Mammary epithelial cell (primary cell): ENCODE measurements at regions of chr21 and their contacts with region 1.

Region 1: DNA sequence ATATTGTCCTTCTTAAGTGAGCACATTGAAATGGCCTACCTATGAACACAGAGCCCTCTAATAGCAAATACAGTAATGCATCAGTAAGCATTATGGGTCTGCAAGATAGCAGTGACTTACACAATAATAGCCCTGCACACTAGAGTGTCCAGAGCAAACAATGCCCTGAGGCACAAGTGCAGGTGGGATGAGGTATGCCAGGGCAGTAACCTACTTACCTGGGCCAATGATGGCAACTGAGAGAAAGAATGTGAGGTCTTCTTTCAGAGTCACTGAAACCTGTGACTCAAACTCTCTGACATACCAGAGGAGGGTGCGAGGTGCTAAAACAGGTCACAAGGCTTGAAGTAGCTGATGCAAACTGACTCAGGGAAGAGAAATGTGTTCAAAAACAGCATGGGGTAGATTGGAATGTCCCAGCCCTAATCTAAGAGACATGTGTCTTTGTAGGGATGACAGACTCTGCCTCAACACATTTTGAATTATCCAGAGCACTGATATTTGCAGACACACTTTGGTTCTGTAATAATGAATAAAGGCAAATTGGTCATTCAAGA is 168.5 kb upstream of the RUNX1 start:
- DNase-seq: peak; percentile 100
- H3K4me3 ChIP-seq: no peak overlapping the region
- H3K27ac ChIP-seq: peak overlapping the region; percentile 98
- H3K4me1 ChIP-seq: peaks cover 28% of the 10 kb centered on the region
- H3K27me3 ChIP-seq: no peaks in the 10 kb centered on the region
- CTCF ChIP-seq: no peak

Region 2: GRCh38 chr21:34807146-34807880 is 410.3 kb before region 1 on chr21:
- CTCF ChIA-PET with region 1: no interaction called
- dilution Hi-C with region 1: no loop called
- in situ Hi-C with region 1: no loop called
- intact Hi-C with region 1: loop called (anchors 2 kb)
- DNase-seq: peak; percentile 97
- H3K4me3 ChIP-seq: no peak overlapping the region
- H3K27ac ChIP-seq: peak overlapping the region; percentile 100
- H3K4me1 ChIP-seq: peaks cover 78% of the 10 kb centered on the region
- H3K27me3 ChIP-seq: no peaks in the 10 kb centered on the region
- CTCF ChIP-seq: peak in 1 of 2 donors; percentile 21

Region 3: DNA sequence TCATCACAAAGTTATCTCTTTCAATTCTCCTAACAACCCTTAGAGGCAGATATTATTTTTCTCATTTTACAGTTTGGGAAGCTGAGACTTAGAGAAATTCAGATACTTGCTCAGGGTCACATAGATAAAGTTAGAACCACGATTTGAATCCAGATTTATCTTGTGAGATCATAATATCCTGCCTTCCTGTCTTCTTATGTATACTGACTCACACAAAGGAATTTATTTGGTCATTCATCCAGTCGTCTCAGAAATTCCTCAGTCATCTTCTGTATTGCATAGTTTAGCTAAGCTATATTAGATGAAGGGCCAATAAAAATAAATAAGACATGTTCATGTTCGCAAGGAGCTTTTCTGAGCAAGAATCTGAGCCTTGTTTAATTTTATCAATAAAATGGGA is 132.7 kb before region 1 on chr21:
- CTCF ChIA-PET with region 1: no interaction called
- dilution Hi-C with region 1: no loop called
- in situ Hi-C with region 1: no loop called
- intact Hi-C with region 1: loop called (anchors 5 kb)
- DNase-seq: peak; percentile 76
- H3K4me3 ChIP-seq: no peak overlapping the region
- H3K27ac ChIP-seq: peak overlapping the region; percentile 81
- H3K4me1 ChIP-seq: peaks cover 34% of the 10 kb centered on the region
- H3K27me3 ChIP-seq: no peaks in the 10 kb centered on the region
- CTCF ChIP-seq: no peak

Region 4: GRCh38 chr21:35179990-35180540 is 37.5 kb before region 1 on chr21:
- CTCF ChIA-PET with region 1: no interaction called
- dilution Hi-C with region 1: no loop called
- in situ Hi-C with region 1: no loop called
- intact Hi-C with region 1: loop called (anchors 1 kb)
- DNase-seq: peak; percentile 87
- H3K4me3 ChIP-seq: no peak overlapping the region
- H3K27ac ChIP-seq: peak overlapping the region; percentile 92
- H3K4me1 ChIP-seq: peaks cover 28% of the 10 kb centered on the region
- H3K27me3 ChIP-seq: no peaks in the 10 kb centered on the region
- CTCF ChIP-seq: no peak

Region 5: DNA sequence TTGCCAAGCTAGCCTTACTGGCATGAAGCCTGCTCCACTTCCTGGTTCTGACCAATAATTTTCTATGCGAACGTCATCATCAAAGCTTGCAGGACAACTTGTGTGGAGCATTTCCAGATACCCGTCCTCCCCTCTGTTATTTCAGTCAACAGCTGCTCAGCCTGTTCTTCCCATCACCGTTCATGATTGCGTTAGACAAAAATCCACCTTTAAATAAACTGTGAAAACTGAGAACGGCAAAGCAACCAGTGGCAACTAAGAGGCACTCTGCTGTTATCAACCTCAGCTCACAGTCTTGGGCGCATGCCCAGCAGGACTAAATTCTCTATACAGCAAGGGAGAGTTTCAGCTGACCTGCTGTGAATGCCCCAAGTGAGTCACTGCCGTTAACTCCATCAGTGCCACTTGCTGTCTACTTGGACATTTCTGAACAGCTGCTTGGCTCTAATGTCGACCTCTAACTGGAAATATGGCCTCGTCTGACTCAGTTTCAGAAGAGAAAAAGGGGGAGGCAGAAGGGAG is 38.9 kb after region 1 on chr21:
- CTCF ChIA-PET with region 1: no interaction called
- dilution Hi-C with region 1: no loop called
- in situ Hi-C with region 1: no loop called
- intact Hi-C with region 1: loop called (anchors 1 kb)
- DNase-seq: peak; percentile 99
- H3K4me3 ChIP-seq: peak overlapping the region; percentile 3 to 31 (median 7)
- H3K27ac ChIP-seq: peak overlapping the region; percentile 98
- H3K4me1 ChIP-seq: peaks cover 17% of the 10 kb centered on the region
- H3K27me3 ChIP-seq: no peaks in the 10 kb centered on the region
- CTCF ChIP-seq: peak in 1 of 2 donors; percentile 16

Region 6: DNA sequence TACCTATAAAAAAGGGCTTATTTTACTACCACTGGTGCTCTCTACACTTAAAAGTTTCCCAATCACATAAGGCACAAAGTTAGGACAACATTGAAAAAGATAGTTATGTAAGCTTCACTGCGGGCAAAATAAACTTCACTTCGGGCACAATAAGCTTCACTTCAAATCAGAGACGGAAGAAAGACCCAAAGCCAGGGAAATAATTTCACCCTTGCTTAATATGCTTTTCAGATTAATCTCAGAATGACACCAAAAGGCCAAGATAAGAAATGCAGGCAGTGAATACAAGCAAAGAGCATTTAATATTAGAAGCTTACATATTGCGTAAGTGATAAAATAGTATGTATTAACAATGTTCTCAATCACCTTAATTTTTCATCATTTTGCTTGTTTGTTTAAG is 398.5 kb after region 1 on chr21:
- CTCF ChIA-PET with region 1: no interaction called
- dilution Hi-C with region 1: no loop called
- in situ Hi-C with region 1: no loop called
- intact Hi-C with region 1: loop called (anchors 10 kb)
- DNase-seq: peak; percentile 40
- H3K4me3 ChIP-seq: no peak overlapping the region
- H3K27ac ChIP-seq: peak overlapping the region; percentile 25
- H3K4me1 ChIP-seq: peaks cover 54% of the 10 kb centered on the region
- H3K27me3 ChIP-seq: no peaks in the 10 kb centered on the region
- CTCF ChIP-seq: peak; percentile 50 to 59